Activated CD4-positive, alpha-beta T cell treated with anti-CD3 and anti-CD28 coated beads for 36 hours (primary cell): ENCODE measurements at regions of chr4 and their contacts with region 1.

Region 1: GRCh38 chr4:3201718-3202702 is 46.9 kb upstream of the MSANTD1 start:
- DNase-seq: peak; percentile 82
- ATAC-seq: peak; percentile 92
- H3K4me3 Mint-ChIP-seq: peak overlapping the region; percentile 41
- H3K27ac Mint-ChIP-seq: peak overlapping the region; percentile 82
- H3K4me1 Mint-ChIP-seq: peaks cover 49% of the 10 kb centered on the region
- H3K27me3 Mint-ChIP-seq: no peaks in the 10 kb centered on the region

Region 2: DNA sequence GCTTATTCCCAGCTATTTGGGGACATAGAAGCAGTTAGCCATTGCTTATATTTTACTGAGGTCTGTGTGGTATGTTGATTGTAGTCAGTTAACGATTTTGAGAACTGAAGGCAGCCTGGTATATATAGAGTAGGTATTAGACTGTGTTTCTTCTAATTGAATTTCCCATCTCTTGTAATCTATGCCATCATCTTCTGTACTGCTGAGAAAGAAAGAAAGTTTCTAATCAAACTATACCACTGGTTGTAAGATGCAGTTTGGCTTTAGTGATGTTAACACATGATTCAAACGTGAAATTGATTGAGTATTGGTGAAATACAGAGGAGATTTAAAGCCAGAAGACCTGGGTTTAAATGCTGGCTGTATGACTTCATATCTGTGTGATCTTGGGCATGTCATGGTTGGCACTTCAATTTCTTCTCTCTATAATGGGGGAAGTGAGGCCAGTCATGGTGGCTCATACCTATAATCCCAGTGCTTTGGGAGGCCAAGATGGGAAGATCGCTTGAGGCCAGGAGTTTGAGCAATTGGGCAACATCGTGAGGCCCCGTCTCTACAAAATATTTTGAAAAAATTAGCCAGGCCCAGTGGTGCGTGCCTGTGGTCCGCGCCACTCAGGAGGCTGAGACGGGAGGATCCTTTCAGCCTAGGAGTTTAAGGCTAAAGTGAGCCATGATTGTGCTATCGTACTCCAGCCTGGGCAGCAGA is 115.9 kb before region 1 on chr4:
- CTCF ChIA-PET with region 1: no interaction called
- POLR2A ChIA-PET with region 1: no interaction called
- intact Hi-C with region 1: loop called in 1 of 2 experiments (anchors 5 kb)
- DNase-seq: no peak
- ATAC-seq: peak; percentile 50
- H3K4me3 Mint-ChIP-seq: peak overlapping the region; percentile 20
- H3K27ac Mint-ChIP-seq: peak overlapping the region; percentile 96
- H3K4me1 Mint-ChIP-seq: peaks cover 68% of the 10 kb centered on the region
- H3K27me3 Mint-ChIP-seq: no peaks in the 10 kb centered on the region

Region 3: GRCh38 chr4:3292571-3293400 is 90.8 kb after region 1 on chr4 and contains the start of gene RGS12:
- CTCF ChIA-PET with region 1: no interaction called
- POLR2A ChIA-PET with region 1: interaction called, 3 read pairs
- intact Hi-C with region 1: loop called in 1 of 2 experiments (anchors 2 kb)
- DNase-seq: peak; percentile 93
- ATAC-seq: peak; percentile 95
- H3K4me3 Mint-ChIP-seq: peak within 1 kb of the TSS; percentile 81
- H3K27ac Mint-ChIP-seq: peak within 1 kb of the TSS; percentile 64
- H3K4me1 Mint-ChIP-seq: peaks cover 11% of the 10 kb centered on the region
- H3K27me3 Mint-ChIP-seq: peaks cover 4% of the 10 kb centered on the region
- total RNA-seq, gene RGS12: 8.0 to 9.4 TPM

Region 4: GRCh38 chr4:3442959-3443749 is 241.1 kb after region 1 on chr4:
- CTCF ChIA-PET with region 1: no interaction called
- POLR2A ChIA-PET with region 1: no interaction called
- intact Hi-C with region 1: loop called in 1 of 2 experiments (anchors 5 kb)
- DNase-seq: peak; percentile 83
- ATAC-seq: peak; percentile 89
- H3K4me3 Mint-ChIP-seq: no peak overlapping the region
- H3K27ac Mint-ChIP-seq: no peak overlapping the region
- H3K4me1 Mint-ChIP-seq: no peaks in the 10 kb centered on the region
- H3K27me3 Mint-ChIP-seq: no peaks in the 10 kb centered on the region